Right ventricle myocardium inferior (tissue), 1 donor: ENCODE measurements at regions of chr7 and their contacts with region 1.

Region 1: GRCh38 chr7:69932034-69932628 is 333.9 kb downstream of the AUTS2 start:
- DNase-seq: no peak
- ATAC-seq: no peak

Region 2: GRCh38 chr7:70165477-70166170 is 233.5 kb after region 1 on chr7:
- intact Hi-C with region 1: loop called (anchors 10 kb)
- DNase-seq: no peak
- ATAC-seq: no peak

Region 3: DNA sequence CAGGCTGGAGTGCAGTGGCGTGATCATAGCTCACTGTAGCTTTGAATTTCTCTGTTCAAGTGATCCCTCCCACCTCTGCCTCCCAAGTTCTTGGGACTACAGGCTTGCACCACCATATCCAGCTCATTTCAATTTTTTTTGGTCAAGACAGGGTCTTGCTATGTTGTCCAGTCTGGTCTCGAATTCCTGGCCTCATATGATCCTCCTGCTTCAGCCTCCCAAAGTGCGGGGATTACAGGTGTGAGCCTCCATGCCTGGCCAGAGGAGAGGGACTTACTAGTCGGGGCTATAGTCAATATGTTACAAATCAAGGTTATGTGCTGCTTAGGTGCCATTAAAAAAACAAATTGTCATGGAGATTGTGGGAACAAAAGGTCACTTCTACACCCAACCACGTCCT is 1094.5 kb after region 1 on chr7:
- intact Hi-C with region 1: no loop called
- DNase-seq: no peak
- ATAC-seq: no peak